ENCODE measurements at regions of chr15 and their contacts with region 1.

Region 1: GRCh38 chr15:50256188-50257041 is 9.1 kb downstream of the HDC start:
- DNase-seq: no peak
- ATAC-seq: no peak
- H3K4me3 ChIP-seq: no peak overlapping the region
- H3K27ac ChIP-seq: no peak overlapping the region
- H3K4me1 ChIP-seq: peaks cover 0 to 29% (median 0%) of the 10 kb centered on the region in 9 donors
- H3K27me3 ChIP-seq: peaks cover 0 to 8% (median under 1%) of the 10 kb centered on the region in 7 donors
- CTCF ChIP-seq: no peak

Region 2: GRCh38 chr15:50315814-50316630 is 59.6 kb after region 1 on chr15:
- intact Hi-C with region 1: loop called in 1 of 10 experiments (anchors 10 kb)
- DNase-seq: no peak
- ATAC-seq: no peak
- H3K4me3 ChIP-seq: no peak overlapping the region
- H3K27ac ChIP-seq: no peak overlapping the region
- H3K4me1 ChIP-seq: peaks cover 0 to 13% (median 0%) of the 10 kb centered on the region in 9 donors
- H3K27me3 ChIP-seq: no peaks in the 10 kb centered on the region
- CTCF ChIP-seq: peak; percentile 38 to 77 (median 69)